ENCODE measurements at regions of chr19 and their contacts with region 1.

Region 1: DNA sequence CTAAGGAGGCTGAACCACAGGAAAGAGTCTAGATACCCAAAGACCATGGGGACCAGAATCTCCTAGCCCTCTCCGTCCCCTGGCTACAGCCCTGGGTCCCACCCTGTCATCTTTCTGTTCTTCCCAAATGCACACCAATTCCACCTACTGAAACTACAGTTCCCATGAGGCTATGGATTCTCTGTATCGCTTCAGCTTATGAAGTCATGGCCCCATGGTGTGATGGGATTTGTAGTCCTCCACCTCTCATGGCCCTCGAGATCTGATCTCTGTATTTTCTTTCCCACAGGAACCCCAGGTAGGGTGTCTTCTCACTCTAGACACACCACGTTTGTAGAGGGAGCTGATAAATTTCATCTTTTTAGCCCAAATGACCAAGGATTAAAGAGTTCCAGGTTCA is 11.8 kb downstream of the PTPRH start:
- DNase-seq: peak; percentile 59
- H3K4me3 ChIP-seq: no peak overlapping the region
- H3K27ac ChIP-seq: no peak overlapping the region
- H3K4me1 ChIP-seq: no peaks in the 10 kb centered on the region
- H3K27me3 ChIP-seq: no peaks in the 10 kb centered on the region
- CTCF ChIP-seq: no peak

Region 2: GRCh38 chr19:54995561-54995960 is 202.0 kb before region 1 on chr19:
- CTCF ChIA-PET with region 1: no interaction called
- POLR2A ChIA-PET with region 1: interaction called, 18 read pairs
- intact Hi-C with region 1: no loop called
- DNase-seq: no peak
- H3K4me3 ChIP-seq: no peak overlapping the region
- H3K27ac ChIP-seq: no peak overlapping the region
- H3K4me1 ChIP-seq: no peaks in the 10 kb centered on the region
- H3K27me3 ChIP-seq: peaks cover 7% of the 10 kb centered on the region
- CTCF ChIP-seq: no peak

Region 3: DNA sequence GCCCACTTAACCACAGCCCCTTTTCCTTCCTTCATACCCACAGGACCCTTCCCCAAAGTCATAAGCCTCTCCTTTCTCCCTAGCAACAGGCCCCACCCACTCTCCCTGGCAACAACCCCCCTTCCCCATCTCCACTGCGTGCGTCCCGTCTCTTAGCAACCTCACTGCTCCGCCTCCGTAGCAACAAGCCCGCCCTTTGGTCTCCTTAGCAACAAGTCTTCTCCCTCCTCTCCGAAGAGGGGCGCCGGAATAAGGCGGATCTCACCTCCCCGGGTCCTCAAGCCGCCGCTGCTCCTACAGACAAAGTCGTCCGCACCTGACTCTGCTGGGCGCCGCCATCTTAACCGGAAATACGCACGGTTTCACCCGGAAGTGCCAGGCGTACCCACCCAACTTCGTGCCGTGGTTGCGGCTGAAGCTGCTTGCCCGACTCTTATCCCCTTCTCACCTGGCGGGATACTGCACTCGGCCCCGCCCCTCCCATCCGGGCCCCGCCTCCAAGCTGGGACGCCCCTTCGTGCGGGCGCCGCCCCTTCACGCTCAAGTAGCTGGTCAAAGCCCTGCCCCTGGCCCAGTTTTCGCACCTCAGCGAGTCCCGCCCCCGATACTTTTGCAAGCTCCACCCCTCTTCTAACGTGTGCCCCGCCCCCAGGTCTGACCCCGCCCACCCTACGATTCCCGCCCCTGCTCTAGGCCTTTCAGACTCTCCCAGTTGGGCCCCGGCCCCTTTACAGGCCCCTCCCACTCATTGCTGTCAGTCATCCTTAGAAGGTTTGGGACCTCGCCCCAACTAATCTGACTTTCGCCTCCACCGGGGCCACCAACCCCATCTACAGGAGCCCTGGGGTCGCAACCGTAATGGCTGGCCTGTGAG is 82.5 kb after region 1 on chr19 and contains the start of gene HSPBP1:
- CTCF ChIA-PET with region 1: interaction called, 12 read pairs
- POLR2A ChIA-PET with region 1: no interaction called
- intact Hi-C with region 1: no loop called
- DNase-seq: peak; percentile 98
- H3K4me3 ChIP-seq: peak within 1 kb of the TSS; percentile 74
- H3K27ac ChIP-seq: peak within 1 kb of the TSS; percentile 84
- H3K4me1 ChIP-seq: peaks cover 12% of the 10 kb centered on the region
- H3K27me3 ChIP-seq: no peaks in the 10 kb centered on the region
- CTCF ChIP-seq: no peak
- total RNA-seq, gene HSPBP1: 80.3 and 83.4 TPM in 2 replicates